ENCODE measurements at regions of chr13 and their contacts with region 1.

Region 1: GRCh38 chr13:113187263-113187669 is 21.2 kb downstream of the PCID2 start:
- DNase-seq: peak; percentile 87
- H3K4me3 ChIP-seq: peak overlapping the region; percentile 24
- H3K27ac ChIP-seq: peak overlapping the region; percentile 82
- H3K4me1 ChIP-seq: peaks cover 15% of the 10 kb centered on the region
- H3K27me3 ChIP-seq: no peaks in the 10 kb centered on the region
- CTCF ChIP-seq: peak; percentile 20

Region 2: GRCh38 chr13:112689303-112690165 is 497.7 kb before region 1 on chr13 and contains the start of gene ATP11A:
- intact Hi-C with region 1: no loop called
- DNase-seq: peak; percentile 95
- H3K4me3 ChIP-seq: peak within 1 kb of the TSS; percentile 99
- H3K27ac ChIP-seq: peak within 1 kb of the TSS; percentile 97
- H3K4me1 ChIP-seq: peaks cover 57% of the 10 kb centered on the region
- H3K27me3 ChIP-seq: no peaks in the 10 kb centered on the region
- CTCF ChIP-seq: no peak
- total RNA-seq, gene ATP11A: 106 TPM

Region 3: GRCh38 chr13:113153810-113154748 is 33.2 kb before region 1 on chr13:
- intact Hi-C with region 1: loop called (anchors 2 kb)
- DNase-seq: peak; percentile 81
- H3K4me3 ChIP-seq: peak overlapping the region; percentile 67
- H3K27ac ChIP-seq: peak overlapping the region; percentile 90
- H3K4me1 ChIP-seq: peaks cover 23% of the 10 kb centered on the region
- H3K27me3 ChIP-seq: peaks cover 11% of the 10 kb centered on the region
- CTCF ChIP-seq: no peak

Region 4: DNA sequence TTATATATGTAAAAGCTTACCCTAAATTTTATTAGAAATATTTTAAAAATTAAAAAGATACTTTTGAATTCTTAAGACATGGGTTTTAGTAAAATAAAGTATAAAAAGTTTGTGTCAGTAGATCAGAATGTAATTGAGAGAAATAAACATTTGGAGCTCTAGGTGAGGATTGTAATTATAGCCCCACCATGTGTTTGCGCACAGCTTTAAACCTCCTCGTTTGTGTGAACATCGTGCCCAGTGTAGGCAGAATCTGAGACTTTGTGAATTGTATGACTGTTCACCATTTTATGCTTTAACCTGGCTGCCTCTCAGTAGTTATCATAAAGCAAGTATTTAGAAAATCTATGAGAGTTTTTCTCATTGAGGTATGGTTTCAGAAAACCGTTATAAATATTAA is 51.3 kb after region 1 on chr13:
- intact Hi-C with region 1: no loop called
- DNase-seq: no peak
- H3K4me3 ChIP-seq: no peak overlapping the region
- H3K27ac ChIP-seq: no peak overlapping the region
- H3K4me1 ChIP-seq: no peaks in the 10 kb centered on the region
- H3K27me3 ChIP-seq: no peaks in the 10 kb centered on the region
- CTCF ChIP-seq: no peak

Region 5: GRCh38 chr13:113374511-113375175 is 187.4 kb after region 1 on chr13:
- intact Hi-C with region 1: no loop called
- DNase-seq: no peak
- H3K4me3 ChIP-seq: no peak overlapping the region
- H3K27ac ChIP-seq: no peak overlapping the region
- H3K4me1 ChIP-seq: peaks cover 2% of the 10 kb centered on the region
- H3K27me3 ChIP-seq: no peaks in the 10 kb centered on the region
- CTCF ChIP-seq: no peak